Activated CD4-positive, alpha-beta memory T cell treated with anti-CD3 and anti-CD28 coated beads, Interleukin-2, amount 10 ng/mL, durations not matched to agents 7 days and 5 days (primary cell): ENCODE measurements at regions of chr13 and their contacts with region 1.

Region 1: GRCh38 chr13:30465585-30466357 is at the start of gene HMGB1:
- DNase-seq: peak; percentile 99
- H3K4me3 Mint-ChIP-seq: peak within 1 kb of the TSS; percentile 96
- H3K27ac Mint-ChIP-seq: peak within 1 kb of the TSS; percentile 100
- H3K4me1 Mint-ChIP-seq: peaks cover 36% of the 10 kb centered on the region
- H3K27me3 Mint-ChIP-seq: peaks cover 2% of the 10 kb centered on the region
- total RNA-seq, gene HMGB1: 611 to 615 TPM

Region 2: DNA sequence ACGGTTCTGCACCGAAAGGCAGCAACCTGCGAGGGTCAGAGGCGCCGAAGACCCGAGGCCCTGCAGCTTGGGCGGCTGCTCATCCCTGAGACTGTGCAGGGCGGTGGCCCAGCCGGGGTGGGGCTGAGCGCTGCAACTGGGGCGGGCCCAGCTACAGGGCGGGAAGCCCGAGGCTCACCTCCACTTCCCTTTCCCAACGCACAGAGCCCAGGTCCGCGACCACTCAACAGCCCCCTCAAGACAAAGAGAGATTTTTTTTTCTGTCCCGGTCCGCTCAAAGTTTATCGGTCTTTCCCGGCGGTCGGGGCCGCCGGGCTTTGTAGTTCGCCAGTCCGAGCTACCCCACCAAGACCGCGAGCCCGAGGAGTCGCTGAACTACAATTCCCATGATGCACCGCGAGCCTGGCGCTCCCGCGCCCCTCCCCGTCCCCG is 159.0 kb before region 1 on chr13:
- CTCF ChIA-PET with region 1: interaction called, 5 read pairs
- POLR2A ChIA-PET with region 1: interaction called, 31 read pairs
- DNase-seq: peak; percentile 92
- H3K4me3 Mint-ChIP-seq: peak overlapping the region; percentile 77
- H3K27ac Mint-ChIP-seq: peak overlapping the region; percentile 78
- H3K4me1 Mint-ChIP-seq: peaks cover 49% of the 10 kb centered on the region
- H3K27me3 Mint-ChIP-seq: no peaks in the 10 kb centered on the region

Region 3: DNA sequence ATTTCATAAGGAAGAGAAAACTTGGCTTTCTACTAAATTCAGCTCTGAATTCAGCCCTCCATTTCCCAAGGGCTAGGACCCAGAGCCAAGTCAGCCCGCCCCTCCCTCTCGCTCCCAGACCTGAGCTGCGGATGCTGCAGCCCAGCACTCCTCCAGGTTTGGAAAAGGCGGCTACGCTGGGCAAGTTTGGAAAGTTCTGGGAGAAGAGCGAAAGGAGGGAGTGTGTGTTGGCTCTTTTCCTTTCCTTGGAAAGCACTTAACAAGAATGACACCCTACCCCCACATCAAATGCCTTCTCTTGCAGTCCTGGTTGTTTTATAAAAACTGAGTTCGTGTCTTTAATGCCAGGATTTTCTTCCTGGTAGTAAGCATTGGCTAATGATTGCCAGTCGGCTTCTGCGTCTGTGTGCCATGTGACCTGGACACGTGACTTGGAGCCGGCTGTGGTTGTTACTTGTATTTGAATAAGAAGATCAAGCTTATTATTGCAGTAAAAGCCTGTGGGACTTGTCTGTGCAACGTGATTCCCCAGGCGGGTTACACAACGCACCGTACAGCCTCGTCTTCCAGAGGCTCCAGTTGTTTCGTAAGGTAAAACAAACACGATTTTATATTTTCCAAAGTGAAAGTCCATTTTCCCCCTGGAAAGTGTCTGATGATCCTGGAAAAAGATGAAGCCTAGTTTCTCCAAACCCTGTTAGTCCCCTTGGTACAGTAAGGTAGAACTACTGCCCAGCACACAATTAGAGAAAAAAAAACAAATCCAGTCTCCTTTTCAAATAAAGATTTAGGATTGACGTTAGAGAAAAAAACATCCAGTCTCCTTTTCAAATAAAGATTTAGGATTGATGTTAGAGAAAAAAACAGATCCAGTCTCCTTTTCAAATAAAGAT is 70.3 kb before region 1 on chr13:
- CTCF ChIA-PET with region 1: no interaction called
- POLR2A ChIA-PET with region 1: interaction called, 32 read pairs
- DNase-seq: peak; percentile 84
- H3K4me3 Mint-ChIP-seq: peak overlapping the region; percentile 83
- H3K27ac Mint-ChIP-seq: peak overlapping the region; percentile 98
- H3K4me1 Mint-ChIP-seq: peaks cover 26% of the 10 kb centered on the region
- H3K27me3 Mint-ChIP-seq: no peaks in the 10 kb centered on the region

Region 4: DNA sequence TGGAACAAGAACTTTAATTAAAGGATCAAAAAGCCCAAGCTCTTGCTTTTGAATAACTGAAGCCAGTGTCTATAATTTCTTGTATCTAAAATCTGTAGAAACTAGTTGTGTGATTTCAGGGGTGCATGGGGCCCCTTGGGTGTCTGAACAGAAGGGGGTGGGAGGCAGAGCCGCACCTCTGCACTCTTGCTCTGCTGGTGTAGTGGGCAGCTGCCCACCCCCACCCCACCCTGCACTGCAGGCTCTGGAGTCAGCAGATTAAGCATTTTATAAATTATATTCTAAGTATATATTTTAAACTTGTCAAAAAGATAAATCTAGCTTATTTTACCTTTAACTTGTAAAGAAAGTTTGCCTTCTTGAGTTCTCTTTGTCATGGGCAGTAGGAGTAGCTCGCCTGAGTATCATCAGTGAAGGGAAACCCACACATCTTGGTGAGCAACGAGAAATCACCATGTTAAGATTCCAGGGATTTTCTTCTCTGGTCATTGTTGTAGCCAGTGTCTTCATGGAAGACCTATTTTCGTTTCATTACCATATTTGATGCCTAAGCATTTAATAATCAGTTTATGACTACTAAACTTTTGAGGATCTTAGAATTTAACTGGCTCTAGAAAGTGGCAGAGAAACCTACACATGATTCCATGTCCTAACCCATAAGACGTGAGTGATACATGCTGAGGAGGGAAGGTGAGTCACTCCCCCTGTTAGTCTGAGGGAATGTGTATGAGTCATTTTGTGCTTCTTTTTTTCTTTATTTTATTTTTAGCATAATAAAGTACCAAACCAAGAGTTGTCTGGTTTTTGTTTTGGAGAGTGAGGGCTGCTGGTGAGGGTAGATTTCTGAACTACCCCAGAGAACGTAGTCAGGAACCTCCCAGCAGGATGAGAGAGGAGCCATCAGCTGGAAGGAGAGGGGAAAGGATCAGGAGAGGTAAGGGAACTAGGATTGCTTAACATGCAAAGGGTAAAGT is 35.8 kb before region 1 on chr13:
- CTCF ChIA-PET with region 1: no interaction called
- POLR2A ChIA-PET with region 1: interaction called, 11 read pairs
- DNase-seq: peak; percentile 26
- H3K4me3 Mint-ChIP-seq: no peak overlapping the region
- H3K27ac Mint-ChIP-seq: peak overlapping the region; percentile 58
- H3K4me1 Mint-ChIP-seq: peaks cover 28% of the 10 kb centered on the region
- H3K27me3 Mint-ChIP-seq: peaks cover 2% of the 10 kb centered on the region

Region 5: GRCh38 chr13:30529085-30529834 is 63.5 kb after region 1 on chr13:
- CTCF ChIA-PET with region 1: no interaction called
- POLR2A ChIA-PET with region 1: no interaction called
- DNase-seq: no peak
- H3K4me3 Mint-ChIP-seq: no peak overlapping the region
- H3K27ac Mint-ChIP-seq: no peak overlapping the region
- H3K4me1 Mint-ChIP-seq: no peaks in the 10 kb centered on the region
- H3K27me3 Mint-ChIP-seq: no peaks in the 10 kb centered on the region

Region 6: DNA sequence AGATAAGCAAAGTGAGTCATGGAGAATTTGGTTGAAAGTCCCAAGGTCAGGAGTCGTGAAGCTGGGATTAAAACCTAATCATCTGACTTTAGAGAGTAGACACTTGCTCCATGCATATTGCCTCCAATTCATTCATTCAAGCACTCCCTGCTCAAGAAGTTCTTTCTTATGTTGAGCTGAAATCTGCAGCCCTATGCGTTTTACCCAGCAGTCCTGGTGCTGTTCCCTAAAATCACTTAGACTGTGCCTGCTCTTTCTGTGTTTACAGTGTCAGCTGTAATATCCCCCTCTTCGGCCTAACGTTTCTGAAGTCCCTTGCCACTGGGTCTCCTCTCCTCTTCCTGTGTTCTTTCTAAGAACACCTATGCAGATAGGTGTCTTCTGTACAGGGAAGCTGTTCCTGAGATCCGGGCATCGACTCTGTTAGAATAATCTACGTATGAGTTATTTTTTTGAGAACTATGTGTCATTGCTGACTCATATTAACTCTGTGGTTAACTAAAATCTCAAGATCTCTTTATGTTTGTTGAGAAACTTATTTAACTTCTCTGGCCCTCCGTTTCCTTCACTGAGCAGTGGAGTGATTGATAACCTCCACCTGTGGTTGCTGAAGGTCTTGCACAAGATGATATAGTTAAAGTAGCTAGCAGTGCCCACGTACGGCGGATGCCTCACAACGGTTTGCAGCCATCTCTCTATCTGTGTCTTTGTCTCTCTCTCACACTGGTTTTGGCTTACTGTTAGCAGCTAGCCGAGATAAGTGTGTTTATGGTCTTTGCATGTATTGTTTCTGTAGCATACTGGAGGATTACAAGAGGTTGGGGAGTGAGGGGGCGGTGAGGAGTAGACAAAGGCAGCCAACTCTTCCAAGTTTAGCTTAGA is 274.2 kb after region 1 on chr13:
- CTCF ChIA-PET with region 1: no interaction called
- POLR2A ChIA-PET with region 1: interaction called, 22 read pairs
- DNase-seq: peak; percentile 79
- H3K4me3 Mint-ChIP-seq: peak overlapping the region; percentile 77
- H3K27ac Mint-ChIP-seq: peak overlapping the region; percentile 97
- H3K4me1 Mint-ChIP-seq: peaks cover 79% of the 10 kb centered on the region
- H3K27me3 Mint-ChIP-seq: no peaks in the 10 kb centered on the region